ENCODE measurements at regions of chrX and their contacts with region 1.

Region 1: GRCh38 chrX:72045552-72046277 is 86.0 kb downstream of the RTL5 start:
- DNase-seq: peak; percentile 56

Region 2: GRCh38 chrX:71989768-71990426 is 55.8 kb before region 1 on chrX:
- CTCF ChIA-PET with region 1: no interaction called
- POLR2A ChIA-PET with region 1: no interaction called
- DNase-seq: no peak

Region 3: DNA sequence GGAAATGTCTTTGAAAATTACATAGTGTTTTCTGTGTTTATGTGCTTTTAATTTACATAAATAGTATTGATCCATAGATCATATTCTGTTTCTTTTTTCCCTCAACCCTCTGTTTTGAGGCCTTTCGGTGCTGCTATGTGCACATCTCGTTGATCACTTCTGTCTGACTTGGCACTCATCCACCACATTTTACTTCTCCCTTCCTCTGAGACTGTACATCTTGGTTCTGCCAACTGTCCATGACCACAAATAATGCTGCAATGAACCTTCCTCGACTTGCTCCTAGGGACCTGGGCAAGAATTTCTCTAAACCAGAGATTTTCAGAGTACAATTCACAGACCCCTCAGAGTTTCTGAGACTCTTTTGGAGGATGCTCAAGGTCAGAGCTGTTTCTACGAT is 11.6 kb after region 1 on chrX:
- CTCF ChIA-PET with region 1: no interaction called
- POLR2A ChIA-PET with region 1: no interaction called
- DNase-seq: no peak

Region 4: DNA sequence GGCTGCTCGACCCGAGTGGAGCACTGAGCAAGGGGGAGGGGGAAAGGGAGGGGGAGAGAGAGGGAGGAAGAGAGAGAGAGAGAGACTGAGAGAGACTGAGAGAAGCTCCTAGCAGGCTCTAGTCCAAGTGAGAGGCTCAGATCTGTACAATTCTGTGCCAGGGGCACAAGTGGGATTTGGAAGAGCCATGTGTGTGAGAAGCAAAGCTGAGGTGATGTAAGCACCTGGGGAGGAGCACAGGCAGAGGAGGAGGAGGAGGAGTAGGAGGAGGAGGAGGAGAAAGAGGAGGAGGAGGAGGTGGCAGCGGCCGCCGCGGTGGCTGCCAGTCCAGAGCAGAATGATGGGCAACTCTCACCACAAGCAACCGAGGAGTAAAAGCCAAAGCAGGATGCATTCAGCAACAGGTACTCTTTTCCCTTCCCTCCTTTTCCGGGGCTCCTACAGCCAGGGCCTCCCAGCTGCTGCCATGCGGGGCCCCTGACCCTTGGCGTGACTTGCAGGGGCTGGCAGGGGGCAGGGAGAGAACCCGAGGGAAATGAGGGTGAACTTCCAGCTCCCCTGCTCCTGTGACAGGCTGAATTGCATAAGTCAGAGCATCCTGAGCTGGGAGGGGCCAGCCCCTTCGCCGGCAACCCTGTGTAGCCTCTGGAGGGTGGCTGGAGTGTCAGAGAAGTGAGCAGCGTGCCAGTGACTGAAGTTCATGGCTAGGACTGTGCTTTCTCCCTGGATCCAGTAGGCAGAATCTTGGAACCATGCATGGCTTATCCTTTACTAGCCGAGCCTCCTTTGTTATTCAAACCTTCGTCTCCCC is 23.8 kb after region 1 on chrX:
- CTCF ChIA-PET with region 1: interaction called, 3 read pairs
- POLR2A ChIA-PET with region 1: interaction called, 12 read pairs
- DNase-seq: no peak